ENCODE measurements at regions of chr1 and their contacts with region 1.

Region 1: DNA sequence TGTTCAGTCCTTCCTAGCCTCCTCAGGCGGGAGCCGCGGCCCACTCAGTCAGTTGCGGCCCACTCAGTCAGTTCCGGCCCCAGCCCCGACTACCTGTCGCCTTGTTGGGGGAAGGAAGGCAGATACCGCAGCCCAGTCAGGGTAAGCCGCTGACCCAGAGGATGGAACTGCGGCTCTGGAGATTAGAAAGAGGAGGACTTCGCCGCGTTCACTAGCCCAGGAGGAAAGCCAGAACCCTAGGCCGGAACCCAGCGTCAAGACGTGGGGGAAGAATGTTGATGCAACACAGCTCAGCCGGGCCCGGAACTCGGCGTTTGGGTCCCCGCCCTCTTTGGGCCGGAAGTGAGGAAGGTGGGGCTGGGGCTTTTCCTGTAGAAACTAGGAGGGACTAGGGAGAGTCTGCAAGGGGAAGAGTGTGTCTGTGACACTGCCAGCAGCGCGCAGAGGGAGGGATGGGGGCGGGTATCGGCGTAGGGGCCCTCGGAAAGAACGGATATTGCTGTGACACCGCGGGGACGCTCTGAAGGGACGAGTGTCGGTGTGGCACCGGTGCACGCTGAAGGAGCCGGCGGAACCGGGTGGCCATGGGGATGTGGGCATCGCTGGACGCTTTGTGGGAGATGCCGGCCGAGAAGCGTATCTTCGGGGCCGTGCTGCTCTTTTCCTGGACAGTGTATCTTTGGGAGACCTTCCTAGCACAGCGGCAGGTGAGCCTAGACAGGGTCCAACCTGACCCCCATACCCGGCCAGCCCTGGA is at the start of gene ZMPSTE24:
- DNase-seq: peak; percentile 92 to 97
- H3K4me3 ChIP-seq: peak within 1 kb of the TSS; percentile 65
- H3K4me3 Mint-ChIP-seq: peak within 1 kb of the TSS; percentile 90
- H3K27ac Mint-ChIP-seq: peak within 1 kb of the TSS; percentile 100
- H3K4me1 ChIP-seq: no peaks in the 10 kb centered on the region; the same call in 1 of the 2 replicates
- H3K4me1 Mint-ChIP-seq: peaks cover 6% of the 10 kb centered on the region
- H3K27me3 ChIP-seq: no peaks in the 10 kb centered on the region
- H3K27me3 Mint-ChIP-seq: no peaks in the 10 kb centered on the region
- CTCF ChIP-seq: no peak
- total RNA-seq, gene ZMPSTE24: 37.9 and 39.9 TPM in 2 replicates

Region 2: DNA sequence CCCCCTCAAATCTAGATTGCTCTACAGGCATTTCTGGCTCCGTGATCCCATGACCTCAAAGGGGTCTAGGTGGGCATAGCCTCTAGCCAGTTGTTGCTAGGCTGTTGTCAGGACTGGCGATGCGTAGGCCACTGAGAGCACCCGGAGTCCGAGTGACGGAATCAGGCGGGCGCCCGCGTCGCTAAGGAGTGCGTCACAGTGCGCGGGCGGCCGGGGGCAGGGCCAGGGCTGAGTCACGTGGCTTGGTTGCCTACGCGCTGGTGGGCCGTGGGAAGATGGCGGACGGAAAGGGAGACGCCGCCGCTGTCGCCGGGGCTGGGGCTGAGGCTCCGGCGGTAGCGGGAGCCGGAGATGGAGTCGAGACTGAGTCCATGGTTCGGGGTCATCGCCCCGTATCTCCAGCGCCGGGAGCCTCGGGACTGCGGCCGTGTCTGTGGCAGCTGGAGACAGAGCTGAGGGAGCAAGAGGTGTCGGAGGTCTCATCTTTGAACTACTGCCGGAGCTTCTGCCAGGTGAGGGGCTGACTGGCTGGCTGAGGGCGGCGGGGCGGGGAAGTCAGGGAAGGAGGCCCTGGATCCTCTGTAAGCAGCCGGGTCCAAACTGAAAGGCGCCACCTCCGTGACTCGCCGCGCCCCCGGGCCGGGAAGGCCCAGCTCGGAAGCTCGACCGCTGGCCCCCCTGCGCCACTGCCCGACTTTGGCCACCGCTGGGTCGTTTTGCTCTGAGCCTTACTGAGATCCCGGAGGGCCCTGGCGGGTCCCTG is 96.6 kb before region 1 on chr1 and contains the start of gene RLF:
- CTCF ChIA-PET with region 1: no interaction called
- POLR2A ChIA-PET with region 1: no interaction called
- intact Hi-C with region 1: loop called (anchors 1 kb)
- DNase-seq: peak; percentile 88 to 90
- H3K4me3 ChIP-seq: peak within 1 kb of the TSS; percentile 74
- H3K4me3 Mint-ChIP-seq: no peak within 1 kb of the TSS
- H3K27ac Mint-ChIP-seq: no peak within 1 kb of the TSS
- H3K4me1 ChIP-seq: peaks cover 5% of the 10 kb centered on the region; the same call in 1 of the 2 replicates
- H3K4me1 Mint-ChIP-seq: peaks cover 13% of the 10 kb centered on the region
- H3K27me3 ChIP-seq: no peaks in the 10 kb centered on the region
- H3K27me3 Mint-ChIP-seq: no peaks in the 10 kb centered on the region
- CTCF ChIP-seq: no peak
- total RNA-seq, gene RLF: 11.6 and 12.8 TPM in 2 replicates

Region 3: DNA sequence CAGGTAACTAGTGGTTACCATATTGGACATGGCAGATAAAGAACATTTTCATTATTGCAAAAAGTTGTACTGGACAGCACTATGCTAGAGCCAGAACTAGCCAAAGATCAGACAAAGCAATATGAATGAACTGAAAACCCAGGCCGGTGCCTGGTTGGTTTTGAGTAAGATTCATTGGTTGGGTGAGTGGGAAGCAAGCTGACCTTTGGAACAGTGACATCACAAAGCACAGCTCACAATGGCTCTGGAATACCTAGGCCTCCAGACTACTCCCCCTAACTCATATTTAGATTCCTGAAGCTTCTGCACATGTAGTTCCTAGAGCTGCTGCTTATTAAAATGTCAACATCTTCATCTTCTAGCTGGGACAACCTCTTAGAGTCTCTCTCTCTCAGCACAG is 10.2 kb before region 1 on chr1 and contains the start of gene TMCO2:
- CTCF ChIA-PET with region 1: no interaction called
- POLR2A ChIA-PET with region 1: interaction called, 3 read pairs
- intact Hi-C with region 1: loop called (anchors 1 kb)
- DNase-seq: peak; percentile 61 to 65
- H3K4me3 ChIP-seq: no peak within 1 kb of the TSS
- H3K4me3 Mint-ChIP-seq: no peak within 1 kb of the TSS
- H3K27ac Mint-ChIP-seq: no peak within 1 kb of the TSS
- H3K4me1 ChIP-seq: peaks cover 23% of the 10 kb centered on the region
- H3K4me1 Mint-ChIP-seq: no peaks in the 10 kb centered on the region
- H3K27me3 ChIP-seq: no peaks in the 10 kb centered on the region
- H3K27me3 Mint-ChIP-seq: no peaks in the 10 kb centered on the region
- CTCF ChIP-seq: no peak
- total RNA-seq, gene TMCO2: not detected in 2 replicates

Region 4: GRCh38 chr1:40315239-40315794 is 57.5 kb after region 1 on chr1:
- CTCF ChIA-PET with region 1: no interaction called
- POLR2A ChIA-PET with region 1: no interaction called
- intact Hi-C with region 1: loop called (anchors 10 kb)
- DNase-seq: peak in 1 of 2 experiments; percentile 22
- H3K4me3 ChIP-seq: no peak overlapping the region
- H3K4me3 Mint-ChIP-seq: peak overlapping the region; percentile 46
- H3K27ac Mint-ChIP-seq: no peak overlapping the region
- H3K4me1 ChIP-seq: no peaks in the 10 kb centered on the region
- H3K4me1 Mint-ChIP-seq: no peaks in the 10 kb centered on the region
- H3K27me3 ChIP-seq: no peaks in the 10 kb centered on the region
- H3K27me3 Mint-ChIP-seq: no peaks in the 10 kb centered on the region
- CTCF ChIP-seq: peak in 1 of 2 experiments; percentile 47

Measured in Caco-2 (cell line).